Dorsolateral prefrontal cortex (tissue), 120 donors: ENCODE measurements at regions of chr2 and their contacts with region 1.

Region 1: DNA sequence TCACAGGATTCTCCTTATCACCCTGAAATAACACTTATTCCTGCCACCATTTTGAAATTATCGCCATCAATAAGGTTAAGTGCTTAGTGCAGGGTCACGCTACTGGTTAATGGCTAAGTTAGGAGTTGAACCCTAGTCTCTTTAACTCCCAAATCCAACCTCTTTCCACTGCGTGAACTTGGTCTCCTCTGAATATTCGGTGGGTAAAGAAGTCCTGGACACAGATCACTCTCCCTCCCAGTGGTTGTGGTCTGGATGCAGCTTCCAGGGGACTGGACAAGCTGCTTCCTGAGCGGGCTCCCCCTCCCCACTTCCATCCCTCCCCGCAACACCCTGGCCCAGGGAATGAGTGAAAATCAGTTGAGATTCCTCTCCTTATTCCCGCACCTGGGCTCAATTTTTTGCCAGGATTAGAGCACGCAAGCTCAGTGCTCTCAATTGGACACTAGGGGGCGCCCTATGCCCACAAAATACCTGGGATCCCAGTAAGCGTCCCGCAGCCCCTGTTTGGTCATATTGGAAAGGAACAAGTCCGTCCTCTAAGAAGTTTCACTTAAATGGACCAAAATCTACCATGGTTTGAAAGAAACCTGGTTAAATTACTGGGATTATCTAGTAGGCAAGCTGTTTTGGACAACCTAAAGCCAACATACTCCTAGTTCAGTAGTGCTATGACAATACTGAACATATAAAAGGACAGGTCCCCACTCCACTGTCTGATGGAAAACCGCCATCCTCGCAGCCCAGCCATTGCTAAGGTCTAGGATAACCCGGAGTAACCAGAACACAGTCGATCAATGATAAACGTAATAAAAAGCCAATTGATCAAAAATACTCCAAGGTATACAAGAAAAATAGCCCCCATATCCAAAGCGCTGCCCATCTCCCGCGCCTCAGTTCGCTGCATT is 40.4 kb downstream of the DHRS9 start:
- DNase-seq: peak; percentile 66 to 87 (median 79)
- H3K4me3 ChIP-seq: peak overlapping the region in 21 of 59 donors; percentile 5 to 51 (median 30)
- H3K27ac ChIP-seq: no peak overlapping the region
- H3K27me3 ChIP-seq: no peaks in the 10 kb centered on the region
- CTCF ChIP-seq: peak; percentile 78 to 94 (median 87)

Region 2: DNA sequence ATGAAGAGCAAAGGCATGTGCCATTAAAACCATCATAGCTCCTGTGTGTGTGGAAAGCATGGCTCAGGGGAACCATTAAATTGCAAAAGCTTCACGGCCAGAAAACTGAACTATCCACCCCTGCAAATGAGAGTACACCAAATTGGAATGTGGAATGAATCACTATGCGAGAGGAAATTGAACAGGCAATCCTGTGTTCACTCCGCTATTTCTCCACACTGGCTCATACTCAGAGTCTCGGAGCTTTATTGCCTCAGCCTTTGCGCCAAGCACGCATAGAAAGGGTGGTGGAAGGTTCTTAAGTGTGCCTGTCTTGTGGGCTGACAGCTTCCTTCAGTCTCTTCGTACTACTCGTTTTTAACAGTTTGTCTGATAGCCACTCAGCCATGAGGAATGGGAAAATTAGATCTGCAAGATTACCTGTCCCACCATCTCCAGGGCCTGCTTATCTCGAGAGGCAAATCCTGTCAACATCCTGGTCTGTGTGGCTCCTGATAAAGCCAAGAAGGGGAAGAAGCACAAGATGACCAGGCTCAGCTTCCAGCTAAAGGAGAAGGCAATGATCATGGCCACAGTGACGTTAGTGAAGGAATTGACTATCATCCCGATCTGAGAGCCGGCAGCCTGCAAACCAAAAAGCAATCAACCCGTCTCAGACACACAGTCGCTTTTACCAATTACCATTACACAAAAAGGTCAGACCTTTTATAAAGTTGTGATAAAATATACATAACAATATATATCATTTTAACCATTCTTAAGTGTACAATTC is 173.8 kb before region 1 on chr2:
- intact Hi-C with region 1: no loop called
- DNase-seq: no peak
- H3K4me3 ChIP-seq: no peak overlapping the region
- H3K27ac ChIP-seq: no peak overlapping the region
- H3K27me3 ChIP-seq: no peaks in the 10 kb centered on the region
- CTCF ChIP-seq: no peak

Region 3: DNA sequence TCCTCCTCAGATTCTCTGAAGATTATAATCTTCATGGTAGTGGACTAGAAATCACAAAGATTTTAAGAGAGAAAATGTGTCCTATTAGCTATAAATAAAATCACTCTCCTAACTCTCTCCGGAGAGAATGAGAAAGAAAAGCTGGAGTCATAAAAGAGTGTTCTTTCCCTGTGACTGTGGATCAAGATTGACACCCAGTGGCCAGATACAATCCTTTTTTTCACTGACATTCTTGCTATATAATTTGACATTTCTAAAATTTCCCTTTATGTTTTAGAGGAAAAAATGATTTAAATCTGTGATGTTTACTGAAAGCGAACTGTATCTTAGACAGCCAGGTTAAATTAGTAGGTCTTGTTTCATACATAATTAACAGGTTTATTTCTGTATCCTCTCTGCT is 287.9 kb after region 1 on chr2:
- intact Hi-C with region 1: loop called (anchors 2 to 10 kb)
- DNase-seq: no peak
- H3K4me3 ChIP-seq: no peak overlapping the region
- H3K27ac ChIP-seq: no peak overlapping the region
- H3K27me3 ChIP-seq: no peaks in the 10 kb centered on the region
- CTCF ChIP-seq: peak in 54 of 56 donors; percentile 33 to 82 (median 62)

Region 4: GRCh38 chr2:169479257-169480078 is 369.7 kb after region 1 on chr2 and contains the start of gene BBS5:
- intact Hi-C with region 1: loop called in 1 of 2 experiments (anchors 5 kb)
- DNase-seq: peak; percentile 78 to 92 (median 89)
- H3K4me3 ChIP-seq: peak within 1 kb of the TSS; percentile 60 to 97 (median 86)
- H3K27ac ChIP-seq: peak within 1 kb of the TSS in 58 of 59 donors; percentile 15 to 94 (median 82)
- H3K27me3 ChIP-seq: no peaks in the 10 kb centered on the region
- CTCF ChIP-seq: peak; percentile 21 to 82 (median 58)
- total RNA-seq, gene BBS5: 13.8 to 28.0 (median 21.3) TPM